ENCODE measurements at regions of chr4 and their contacts with region 1.

Region 1: GRCh38 chr4:80221161-80221560 is 23.9 kb downstream of the PRDM8 start:
- DNase-seq: no peak
- H3K4me3 ChIP-seq: no peak overlapping the region
- H3K4me3 Mint-ChIP-seq: no peak overlapping the region
- H3K27ac ChIP-seq: no peak overlapping the region
- H3K27ac Mint-ChIP-seq: no peak overlapping the region
- H3K4me1 ChIP-seq: no peaks in the 10 kb centered on the region
- H3K4me1 Mint-ChIP-seq: no peaks in the 10 kb centered on the region
- H3K27me3 ChIP-seq: peaks cover 9% of the 10 kb centered on the region
- H3K27me3 Mint-ChIP-seq: peaks cover 11 to 15% of the 10 kb centered on the region in 2 donors

Region 2: DNA sequence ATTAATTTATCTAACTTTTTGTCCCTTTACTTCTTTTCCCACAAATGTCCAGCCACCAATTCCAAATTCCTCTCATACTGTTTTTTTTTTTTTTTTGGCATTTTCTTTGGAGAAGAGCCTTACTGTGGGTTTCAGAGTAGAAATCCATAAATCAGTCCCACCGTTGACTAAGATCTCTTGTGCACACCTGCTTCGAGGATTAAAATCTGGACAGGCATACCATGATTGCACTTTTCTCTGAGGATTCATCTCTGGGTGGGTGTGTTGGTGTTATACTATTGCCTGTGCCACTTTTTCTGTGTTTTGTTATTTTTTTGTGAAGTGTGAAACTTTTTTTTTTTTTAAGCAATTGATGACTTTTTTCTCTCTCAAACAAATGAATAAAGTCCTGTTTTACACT is 10.6 kb before region 1 on chr4:
- CTCF ChIA-PET with region 1: interaction called, 12 read pairs
- POLR2A ChIA-PET with region 1: no interaction called
- intact Hi-C with region 1: no loop called
- DNase-seq: no peak
- H3K4me3 ChIP-seq: no peak overlapping the region
- H3K4me3 Mint-ChIP-seq: no peak overlapping the region
- H3K27ac ChIP-seq: no peak overlapping the region
- H3K27ac Mint-ChIP-seq: no peak overlapping the region
- H3K4me1 ChIP-seq: no peaks in the 10 kb centered on the region
- H3K4me1 Mint-ChIP-seq: peaks cover 0 to 6% (median 2%) of the 10 kb centered on the region in 4 donors
- H3K27me3 ChIP-seq: no peaks in the 10 kb centered on the region
- H3K27me3 Mint-ChIP-seq: peaks cover 0 to 2% of the 10 kb centered on the region in 2 donors

Region 3: DNA sequence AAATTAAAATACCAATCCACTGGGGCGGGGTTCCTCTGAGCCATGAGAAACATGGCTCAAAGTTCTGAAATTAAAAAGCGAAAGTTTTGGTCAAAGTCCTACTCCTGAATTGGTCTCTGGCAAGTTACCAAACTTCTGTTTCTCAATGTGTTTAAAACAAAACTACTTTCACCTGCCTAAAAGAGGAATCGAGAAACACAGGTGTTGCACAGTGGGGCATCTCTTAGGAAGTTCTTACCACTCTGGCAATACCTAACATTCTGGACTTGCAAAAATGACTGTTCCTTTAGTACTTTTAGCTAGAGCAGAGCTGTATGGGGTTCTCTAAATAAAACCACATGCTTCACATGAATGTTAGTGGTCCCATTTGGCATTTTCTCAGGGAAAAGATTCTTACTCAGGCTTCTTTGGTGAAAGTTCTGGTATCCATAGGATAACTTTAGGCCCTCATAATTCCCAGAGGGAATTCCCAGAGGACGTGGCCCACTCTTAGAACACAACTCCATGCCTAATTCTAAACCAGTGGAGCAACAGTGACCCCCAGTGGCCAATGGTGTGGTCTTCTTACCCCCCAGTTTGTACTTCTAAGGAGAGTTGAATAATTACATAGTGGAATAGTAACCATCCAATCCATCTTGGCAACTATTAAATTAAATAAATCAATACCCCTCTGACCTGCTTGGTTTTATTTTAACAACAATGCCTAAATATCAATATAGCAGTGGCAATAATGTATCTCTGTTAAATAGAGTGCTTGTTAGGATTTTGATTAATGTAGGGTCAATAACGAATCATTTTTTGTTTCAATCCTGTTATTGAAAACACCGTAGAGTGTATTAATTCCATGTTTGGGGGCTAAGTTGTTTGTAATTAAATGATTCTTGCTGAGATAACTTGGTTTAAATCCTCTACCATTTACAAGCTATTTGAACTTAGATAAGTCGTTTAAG is 831.2 kb after region 1 on chr4:
- CTCF ChIA-PET with region 1: no interaction called
- POLR2A ChIA-PET with region 1: no interaction called
- intact Hi-C with region 1: loop called (anchors 5 kb)
- DNase-seq: peak in 4 of 5 donors; percentile 20 to 39 (median 23)
- H3K4me3 ChIP-seq: no peak overlapping the region
- H3K4me3 Mint-ChIP-seq: no peak overlapping the region
- H3K27ac ChIP-seq: no peak overlapping the region
- H3K27ac Mint-ChIP-seq: no peak overlapping the region
- H3K4me1 ChIP-seq: no peaks in the 10 kb centered on the region
- H3K4me1 Mint-ChIP-seq: no peaks in the 10 kb centered on the region
- H3K27me3 ChIP-seq: no peaks in the 10 kb centered on the region
- H3K27me3 Mint-ChIP-seq: peaks cover 4 to 5% of the 10 kb centered on the region in 2 donors

Measured in CD4-positive, alpha-beta memory T cell (primary cell).